ENCODE measurements at regions of chr10 and their contacts with region 1.

Region 1: GRCh38 chr10:102904346-102904745 is 13.7 kb upstream of the CNNM2 start:
- DNase-seq: no peak
- H3K4me3 ChIP-seq: no peak overlapping the region
- H3K27ac ChIP-seq: no peak overlapping the region
- H3K4me1 ChIP-seq: no peaks in the 10 kb centered on the region
- H3K27me3 ChIP-seq: no peaks in the 10 kb centered on the region
- CTCF ChIP-seq: no peak

Region 2: DNA sequence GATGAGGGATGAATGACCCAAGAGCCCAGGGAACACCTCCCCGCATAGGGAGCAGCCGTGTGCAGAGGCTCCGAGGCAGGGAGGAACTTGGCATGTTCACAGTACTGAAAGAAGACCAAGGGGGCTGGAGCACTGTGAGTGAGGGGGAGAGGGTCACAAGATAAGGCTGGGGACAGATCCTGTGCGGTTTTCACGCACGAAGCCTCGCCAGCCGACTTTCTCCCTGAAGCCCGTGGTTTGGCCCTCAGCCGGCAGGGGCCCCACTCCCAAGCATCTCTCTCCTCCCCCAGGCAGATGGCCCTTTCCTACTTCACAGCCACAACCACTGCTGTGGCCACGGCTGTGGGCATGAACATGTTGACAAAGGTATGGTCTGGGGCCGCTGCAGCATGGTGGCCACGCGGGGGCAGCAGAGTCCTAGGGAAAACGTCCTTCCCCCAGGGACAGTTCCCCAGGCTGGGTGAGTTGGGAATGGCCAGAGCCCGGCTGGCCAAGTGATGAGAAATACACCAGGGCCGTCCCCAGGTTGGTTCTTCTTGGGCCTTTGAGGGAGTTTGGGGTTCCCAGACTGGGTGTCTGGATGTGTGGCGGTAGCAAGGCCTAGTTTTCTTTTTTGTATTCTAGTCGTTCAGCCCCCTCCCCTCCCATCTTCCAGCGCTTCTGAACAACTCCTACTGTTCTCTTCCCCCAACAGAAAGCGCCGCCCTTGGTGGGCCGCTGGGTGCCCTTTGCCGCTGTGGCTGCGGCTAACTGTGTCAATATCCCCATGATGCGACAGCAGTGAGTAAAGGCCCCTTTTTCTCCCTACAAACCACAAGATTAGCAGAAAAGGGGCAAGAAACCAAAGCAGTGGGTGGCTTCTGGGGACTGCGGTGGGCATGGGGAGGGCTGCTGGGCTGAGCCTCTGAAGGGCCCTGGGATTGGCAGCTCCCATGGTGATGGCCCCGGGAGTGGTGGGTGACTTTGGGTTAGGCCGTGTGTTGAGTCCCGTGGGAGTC is 175.0 kb before region 1 on chr10:
- intact Hi-C with region 1: loop called (anchors 5 kb)
- DNase-seq: peak; percentile 87
- H3K4me3 ChIP-seq: no peak overlapping the region
- H3K27ac ChIP-seq: no peak overlapping the region
- H3K4me1 ChIP-seq: peaks cover 10% of the 10 kb centered on the region
- H3K27me3 ChIP-seq: no peaks in the 10 kb centered on the region
- CTCF ChIP-seq: peak; percentile 97

Region 3: DNA sequence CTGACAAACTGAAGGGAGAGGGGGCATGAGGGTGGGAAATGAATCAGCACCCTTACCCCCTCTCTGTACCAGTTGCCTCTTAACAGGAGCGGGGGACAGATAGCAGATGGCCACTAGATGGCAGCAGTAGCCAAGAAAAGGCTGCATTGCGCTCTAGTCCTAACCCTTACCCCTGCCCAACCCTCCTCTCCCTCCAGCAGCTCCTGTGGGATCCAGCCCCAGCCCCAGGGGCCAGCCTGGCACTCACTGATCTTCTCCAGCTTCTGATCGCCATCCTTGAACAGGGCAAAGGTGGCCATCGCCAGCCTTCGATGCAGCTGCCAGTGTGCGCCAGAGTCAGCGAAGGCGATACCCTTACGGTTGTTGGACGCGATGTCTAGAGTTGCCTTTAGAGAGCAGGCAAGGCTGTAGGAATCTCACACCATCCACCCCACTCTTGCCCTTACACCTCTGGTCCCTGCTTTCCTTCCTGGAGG is 69.3 kb before region 1 on chr10:
- intact Hi-C with region 1: loop called (anchors 10 kb)
- DNase-seq: peak; percentile 68
- H3K4me3 ChIP-seq: no peak overlapping the region
- H3K27ac ChIP-seq: no peak overlapping the region
- H3K4me1 ChIP-seq: peaks cover 9% of the 10 kb centered on the region
- H3K27me3 ChIP-seq: no peaks in the 10 kb centered on the region
- CTCF ChIP-seq: peak; percentile 92